ENCODE measurements at regions of chr3 and their contacts with region 1.

Region 1: GRCh38 chr3:134846911-134847317 is 51.9 kb downstream of the EPHB1 start:
- DNase-seq: no peak
- H3K4me3 ChIP-seq: no peak overlapping the region
- H3K27ac ChIP-seq: no peak overlapping the region
- H3K4me1 ChIP-seq: no peaks in the 10 kb centered on the region
- H3K27me3 ChIP-seq: peaks cover 52% of the 10 kb centered on the region
- CTCF ChIP-seq: no peak

Region 2: GRCh38 chr3:134964226-134964625 is 117.3 kb after region 1 on chr3:
- CTCF ChIA-PET with region 1: no interaction called
- POLR2A ChIA-PET with region 1: interaction called, 12 read pairs
- intact Hi-C with region 1: no loop called
- DNase-seq: no peak
- H3K4me3 ChIP-seq: no peak overlapping the region
- H3K27ac ChIP-seq: no peak overlapping the region
- H3K4me1 ChIP-seq: no peaks in the 10 kb centered on the region
- H3K27me3 ChIP-seq: peaks cover 32% of the 10 kb centered on the region
- CTCF ChIP-seq: no peak

Measured in A673 (cell line).